CD4-positive, alpha-beta T cell (primary cell): ENCODE measurements at regions of chr1 and their contacts with region 1.

Region 1: DNA sequence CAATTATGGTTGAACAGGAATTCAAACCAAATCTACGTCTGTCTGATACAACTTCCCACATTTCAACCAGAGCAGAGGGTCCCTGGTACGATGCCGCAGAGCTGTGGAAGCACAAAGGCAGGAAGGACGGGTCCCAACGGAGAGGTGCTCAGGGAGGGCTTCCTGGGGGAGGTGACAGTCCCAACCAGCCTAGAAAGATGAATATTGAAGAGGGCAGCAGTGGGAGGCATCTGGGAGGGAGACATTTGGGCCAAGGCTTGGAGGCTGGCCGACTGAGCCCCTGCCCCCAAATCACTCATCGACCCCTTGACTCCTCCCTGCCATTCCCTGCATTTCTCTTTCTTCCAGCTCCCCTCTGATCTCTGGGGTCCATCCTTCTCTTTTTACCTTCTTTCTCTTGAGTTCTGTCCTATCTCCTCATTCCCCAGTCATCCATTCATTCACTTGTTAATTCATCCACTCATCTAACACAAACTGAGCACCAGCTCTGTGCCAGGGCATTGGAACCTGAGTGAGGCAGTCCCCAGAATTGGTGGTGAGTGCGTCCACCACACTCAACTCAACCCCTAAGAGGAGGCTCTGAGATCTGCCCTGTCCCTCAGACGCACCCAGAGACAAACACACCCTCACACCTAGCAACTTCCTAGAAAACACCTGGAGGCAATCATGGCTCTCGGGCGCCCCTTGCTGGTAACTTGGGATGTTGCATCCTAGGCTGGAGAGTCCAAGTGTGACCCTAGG is 13.2 kb upstream of the CELA3B start:
- DNase-seq: peak; percentile 70 to 90 (median 82)
- ATAC-seq: peak; percentile 98
- H3K4me3 ChIP-seq: no peak overlapping the region
- H3K4me3 Mint-ChIP-seq: no peak overlapping the region
- H3K27ac ChIP-seq: no peak overlapping the region
- H3K27ac Mint-ChIP-seq: peak overlapping the region; percentile 25
- H3K4me1 ChIP-seq: peaks cover 10% of the 10 kb centered on the region
- H3K4me1 Mint-ChIP-seq: peaks cover 21% of the 10 kb centered on the region
- H3K27me3 ChIP-seq: no peaks in the 10 kb centered on the region
- H3K27me3 Mint-ChIP-seq: peaks cover 2% of the 10 kb centered on the region
- CTCF ChIP-seq: peak; percentile 96

Region 2: GRCh38 chr1:21508580-21509350 is 454.9 kb before region 1 on chr1:
- CTCF ChIA-PET with region 1: no interaction called
- POLR2A ChIA-PET with region 1: no interaction called
- intact Hi-C with region 1: loop called in 1 of 2 experiments (anchors 1 kb)
- DNase-seq: peak; percentile 25 to 75 (median 53)
- ATAC-seq: peak; percentile 91
- H3K4me3 ChIP-seq: peak overlapping the region; percentile 3
- H3K4me3 Mint-ChIP-seq: peak overlapping the region; percentile 79
- H3K27ac ChIP-seq: no peak overlapping the region
- H3K27ac Mint-ChIP-seq: no peak overlapping the region
- H3K4me1 ChIP-seq: peaks cover 11% of the 10 kb centered on the region
- H3K4me1 Mint-ChIP-seq: peaks cover 19% of the 10 kb centered on the region
- H3K27me3 ChIP-seq: peaks cover 45 to 48% of the 10 kb centered on the region in 2 experiments
- H3K27me3 Mint-ChIP-seq: peaks cover 69% of the 10 kb centered on the region
- CTCF ChIP-seq: no peak

Region 3: DNA sequence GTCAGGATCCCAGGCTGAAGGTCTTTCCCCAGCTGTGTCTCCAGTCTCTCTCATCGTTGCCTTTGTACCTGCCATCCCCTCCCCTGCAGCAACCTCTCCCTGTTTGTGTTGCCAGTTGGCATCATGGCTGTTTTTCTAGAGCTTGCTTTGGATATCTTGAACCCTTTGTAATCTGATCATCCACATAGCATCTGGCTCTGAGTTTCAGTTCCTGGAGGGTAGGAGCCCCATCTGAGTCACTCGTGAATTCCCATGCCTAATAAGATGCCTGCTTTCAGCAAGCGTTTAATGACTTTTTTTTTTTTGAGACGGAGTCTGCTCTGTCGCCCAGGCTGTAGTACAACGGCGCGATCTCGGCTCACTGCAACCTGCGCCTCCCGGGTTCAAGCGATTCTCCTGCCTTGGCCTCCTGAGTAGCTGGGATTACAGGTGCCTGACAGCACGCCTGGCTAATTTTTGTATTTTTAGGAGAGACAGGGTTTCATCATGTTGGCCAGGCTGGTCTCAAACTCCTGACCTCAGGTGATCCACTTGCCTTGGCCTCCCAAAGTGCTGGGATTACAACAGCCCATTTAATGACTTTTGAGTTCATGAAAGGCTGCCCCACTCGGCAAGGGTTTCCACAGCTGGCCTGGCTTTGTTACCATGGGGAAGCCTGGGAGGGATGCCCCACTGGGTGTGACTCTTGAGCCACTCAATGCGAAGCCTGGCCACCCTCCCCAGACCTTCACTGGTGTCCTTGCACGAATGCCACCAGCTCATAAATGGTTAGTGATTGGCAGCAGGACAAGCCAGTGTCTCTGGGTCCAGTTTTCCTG is 442.5 kb before region 1 on chr1:
- CTCF ChIA-PET with region 1: no interaction called
- POLR2A ChIA-PET with region 1: no interaction called
- intact Hi-C with region 1: no loop called
- DNase-seq: no peak
- ATAC-seq: no peak
- H3K4me3 ChIP-seq: no peak overlapping the region
- H3K4me3 Mint-ChIP-seq: no peak overlapping the region
- H3K27ac ChIP-seq: no peak overlapping the region
- H3K27ac Mint-ChIP-seq: no peak overlapping the region
- H3K4me1 ChIP-seq: no peaks in the 10 kb centered on the region
- H3K4me1 Mint-ChIP-seq: no peaks in the 10 kb centered on the region
- H3K27me3 ChIP-seq: peaks cover 0 to 3% of the 10 kb centered on the region in 2 experiments
- H3K27me3 Mint-ChIP-seq: peaks cover 3% of the 10 kb centered on the region
- CTCF ChIP-seq: no peak

Region 4: DNA sequence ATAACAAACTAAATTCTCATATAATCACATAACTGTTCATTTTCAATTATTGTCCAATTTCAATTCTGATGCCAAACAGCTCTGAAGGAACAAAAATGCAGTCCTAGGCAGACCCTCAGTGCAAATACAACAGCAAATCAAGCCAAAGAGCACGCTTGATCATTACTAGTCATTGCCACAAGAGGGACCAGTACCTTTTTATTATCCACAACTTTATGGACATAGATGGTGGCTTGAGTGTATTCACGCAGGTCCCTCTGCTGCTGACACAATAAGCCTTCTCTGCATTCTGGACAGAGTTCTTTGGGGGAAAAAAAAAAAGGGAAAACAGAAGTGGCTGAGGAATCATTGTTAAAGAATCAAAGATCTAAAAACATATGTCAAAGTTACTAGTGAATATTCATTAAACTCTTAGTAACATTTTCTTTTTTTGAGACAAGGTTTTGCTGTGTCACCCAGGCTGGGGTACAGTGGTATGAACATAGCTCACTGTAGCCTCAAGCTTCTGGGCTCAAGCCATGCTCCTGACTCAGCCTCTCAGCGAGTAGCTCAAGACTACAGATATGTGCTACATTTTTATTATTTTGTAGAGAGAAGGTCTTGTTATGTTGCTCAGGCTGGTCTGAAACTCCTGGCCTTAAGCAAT is 260.2 kb before region 1 on chr1:
- CTCF ChIA-PET with region 1: no interaction called
- POLR2A ChIA-PET with region 1: no interaction called
- intact Hi-C with region 1: loop called (anchors 5 to 10 kb)
- DNase-seq: peak in 3 of 14 experiments; percentile 14 to 28 (median 22)
- ATAC-seq: no peak
- H3K4me3 ChIP-seq: no peak overlapping the region
- H3K4me3 Mint-ChIP-seq: no peak overlapping the region
- H3K27ac ChIP-seq: no peak overlapping the region
- H3K27ac Mint-ChIP-seq: no peak overlapping the region
- H3K4me1 ChIP-seq: no peaks in the 10 kb centered on the region
- H3K4me1 Mint-ChIP-seq: no peaks in the 10 kb centered on the region
- H3K27me3 ChIP-seq: no peaks in the 10 kb centered on the region
- H3K27me3 Mint-ChIP-seq: no peaks in the 10 kb centered on the region
- CTCF ChIP-seq: no peak

Region 5: DNA sequence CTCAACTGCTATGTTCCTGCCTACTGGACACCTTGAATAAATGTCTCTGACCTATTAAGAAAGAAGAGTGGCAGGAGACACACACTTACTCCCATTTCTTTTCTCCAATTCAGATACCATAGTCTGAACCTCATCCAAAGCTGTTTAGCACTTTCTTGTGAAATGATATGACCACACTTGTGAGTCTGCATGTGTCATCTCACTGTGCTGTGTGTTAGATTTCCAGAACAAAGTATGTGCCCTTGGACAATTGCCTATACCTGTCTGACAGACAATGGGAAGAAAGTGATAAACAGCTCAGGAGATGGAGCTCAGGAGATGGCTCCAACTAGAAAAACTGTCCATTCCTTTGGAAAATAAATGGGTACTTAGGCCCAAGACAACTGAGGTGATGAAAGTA is 229.1 kb before region 1 on chr1:
- CTCF ChIA-PET with region 1: no interaction called
- POLR2A ChIA-PET with region 1: no interaction called
- intact Hi-C with region 1: no loop called
- DNase-seq: no peak
- ATAC-seq: no peak
- H3K4me3 ChIP-seq: no peak overlapping the region
- H3K4me3 Mint-ChIP-seq: no peak overlapping the region
- H3K27ac ChIP-seq: no peak overlapping the region
- H3K27ac Mint-ChIP-seq: no peak overlapping the region
- H3K4me1 ChIP-seq: no peaks in the 10 kb centered on the region
- H3K4me1 Mint-ChIP-seq: no peaks in the 10 kb centered on the region
- H3K27me3 ChIP-seq: no peaks in the 10 kb centered on the region
- H3K27me3 Mint-ChIP-seq: no peaks in the 10 kb centered on the region
- CTCF ChIP-seq: no peak

Region 6: DNA sequence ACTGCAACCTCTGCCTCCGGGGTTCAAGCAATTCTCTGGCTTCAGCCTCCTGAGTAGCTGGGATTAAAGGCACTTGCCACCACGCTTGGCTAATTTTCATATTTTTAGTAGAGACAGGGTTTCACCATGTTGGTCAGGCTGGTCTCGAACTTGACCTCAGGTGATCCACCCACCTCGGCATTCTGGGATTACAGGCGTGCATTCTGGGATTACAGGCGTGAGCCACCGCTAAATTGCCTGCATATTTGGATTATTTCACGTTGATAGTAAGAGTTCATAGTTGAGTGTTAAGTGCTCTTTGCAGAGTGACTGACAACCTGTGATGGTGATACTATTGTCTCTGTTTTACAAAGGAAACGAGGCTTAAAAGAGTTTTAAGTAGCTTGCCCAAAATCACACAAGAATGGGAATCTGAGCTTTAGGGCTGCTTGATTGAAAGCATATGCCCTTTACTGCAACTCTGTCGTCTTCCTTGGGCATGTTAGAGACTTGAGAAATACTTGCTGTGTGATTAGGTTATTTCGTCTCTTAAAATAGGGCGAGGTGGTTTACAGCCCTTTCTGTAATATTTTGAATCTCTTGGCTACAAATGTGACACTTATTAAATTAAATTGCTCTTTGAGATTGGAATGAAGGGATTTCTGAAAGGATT is 101.2 kb after region 1 on chr1:
- CTCF ChIA-PET with region 1: no interaction called
- POLR2A ChIA-PET with region 1: no interaction called
- intact Hi-C with region 1: no loop called
- DNase-seq: no peak
- ATAC-seq: no peak
- H3K4me3 ChIP-seq: no peak overlapping the region
- H3K4me3 Mint-ChIP-seq: peak overlapping the region; percentile 61
- H3K27ac ChIP-seq: no peak overlapping the region
- H3K27ac Mint-ChIP-seq: peak overlapping the region; percentile 55
- H3K4me1 ChIP-seq: peaks cover 79% of the 10 kb centered on the region
- H3K4me1 Mint-ChIP-seq: peaks cover 87% of the 10 kb centered on the region
- H3K27me3 ChIP-seq: no peaks in the 10 kb centered on the region
- H3K27me3 Mint-ChIP-seq: no peaks in the 10 kb centered on the region
- CTCF ChIP-seq: no peak